HAP-1 (cell line): ENCODE measurements at regions of chr6 and their contacts with region 1.

Region 1: GRCh38 chr6:64012351-64013001 is 376.9 kb downstream of the PHF3 start:
- DNase-seq: peak in 1 of 2 experiments; percentile 13
- H3K4me3 ChIP-seq: no peak overlapping the region
- H3K4me1 ChIP-seq: no peaks in the 10 kb centered on the region
- H3K27me3 ChIP-seq: no peaks in the 10 kb centered on the region

Region 2: DNA sequence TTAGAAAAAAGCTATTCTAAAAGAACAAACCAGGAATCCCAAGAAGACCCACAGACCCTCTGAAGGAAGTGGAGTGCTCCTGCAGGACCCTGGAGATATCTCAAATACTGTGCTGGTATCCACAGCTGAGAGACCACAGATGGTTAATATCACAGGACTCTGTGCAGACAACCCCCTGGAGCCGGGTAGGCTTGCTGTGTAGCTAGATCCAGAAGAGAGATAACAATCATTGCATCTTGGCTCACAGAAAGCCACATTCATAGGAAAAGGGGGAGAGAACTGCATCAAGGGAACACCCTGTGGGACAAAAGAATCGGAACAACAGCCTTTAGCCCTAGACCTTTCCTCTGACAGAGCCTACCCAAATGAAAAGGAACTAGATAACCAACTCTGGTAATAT is 312.6 kb after region 1 on chr6:
- in situ Hi-C with region 1: loop called (anchors 10 kb)
- DNase-seq: no peak
- H3K4me3 ChIP-seq: no peak overlapping the region
- H3K4me1 ChIP-seq: no peaks in the 10 kb centered on the region
- H3K27me3 ChIP-seq: no peaks in the 10 kb centered on the region